ENCODE measurements at regions of chr4 and their contacts with region 1.

Region 1: DNA sequence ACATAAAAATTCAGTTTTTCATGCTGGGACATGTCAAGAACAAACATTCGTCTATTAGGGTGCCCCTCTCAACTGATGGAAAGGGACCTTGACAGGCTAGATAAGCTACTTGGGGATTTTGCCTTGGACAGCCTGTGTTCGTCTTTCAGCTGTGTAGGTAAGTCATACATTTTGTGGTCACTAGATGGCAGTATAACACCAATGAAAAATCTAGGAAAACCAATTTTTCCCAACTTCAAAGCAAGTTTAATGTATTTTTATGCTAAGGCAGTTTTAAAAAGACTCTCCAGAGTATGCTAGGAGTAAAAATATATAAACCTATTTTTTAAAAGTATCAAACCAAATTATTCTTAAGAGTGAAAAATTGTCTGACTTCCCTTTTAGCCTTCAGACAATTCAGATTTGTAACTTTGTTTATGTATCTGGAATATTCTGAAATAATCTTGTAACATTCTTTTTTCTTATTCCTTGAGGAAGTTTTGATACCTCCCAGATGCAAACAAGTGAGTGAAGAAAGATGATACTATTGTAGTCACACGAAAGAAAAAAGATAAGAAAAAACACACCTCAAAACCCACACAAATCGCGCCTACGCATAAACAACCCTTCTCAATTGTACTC is 158.3 kb downstream of the CPE start:
- DNase-seq: no peak
- ATAC-seq: peak; percentile 56

Region 2: DNA sequence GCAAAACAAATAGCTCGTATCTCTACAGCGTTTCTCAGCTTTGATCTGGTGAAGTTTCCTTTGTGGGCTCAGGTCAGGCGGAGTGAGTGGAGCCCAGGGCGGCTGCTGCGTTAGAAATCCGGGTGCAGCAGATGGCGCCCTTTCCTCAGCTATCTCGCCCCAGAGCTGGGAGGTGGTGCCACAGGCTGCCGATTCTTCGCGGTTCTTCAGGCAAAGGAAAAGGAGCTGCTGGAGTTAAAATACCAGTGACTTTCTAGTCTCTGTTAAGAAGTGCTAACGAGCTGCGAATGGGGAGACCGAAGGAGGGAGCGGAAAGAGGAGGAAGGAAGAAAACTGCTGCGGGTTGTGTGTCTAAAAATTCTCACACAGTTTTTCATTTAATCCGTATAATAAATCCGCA is 43.8 kb before region 1 on chr4:
- intact Hi-C with region 1: no loop called
- DNase-seq: peak; percentile 81
- ATAC-seq: peak; percentile 96

Region 3: DNA sequence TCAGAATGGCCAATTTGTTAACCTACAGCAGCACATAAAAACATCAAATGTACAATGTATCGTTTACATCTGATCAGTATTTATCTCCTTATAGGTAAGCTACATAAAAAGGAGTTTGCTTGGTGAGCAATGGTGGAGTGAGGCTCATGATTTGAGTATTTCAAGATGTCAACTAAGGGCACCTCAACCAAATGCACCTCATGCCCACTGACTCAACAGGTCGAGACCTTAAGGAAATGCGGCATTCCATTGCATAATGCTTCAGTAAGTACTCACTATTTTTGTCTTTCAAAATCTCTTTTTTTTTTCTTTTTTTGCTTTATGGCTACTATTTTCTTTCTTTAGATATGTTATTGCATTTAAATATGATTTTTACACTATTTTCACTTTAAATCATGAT is 154.9 kb after region 1 on chr4:
- intact Hi-C with region 1: loop called (anchors 10 kb)
- DNase-seq: no peak
- ATAC-seq: no peak

Region 4: DNA sequence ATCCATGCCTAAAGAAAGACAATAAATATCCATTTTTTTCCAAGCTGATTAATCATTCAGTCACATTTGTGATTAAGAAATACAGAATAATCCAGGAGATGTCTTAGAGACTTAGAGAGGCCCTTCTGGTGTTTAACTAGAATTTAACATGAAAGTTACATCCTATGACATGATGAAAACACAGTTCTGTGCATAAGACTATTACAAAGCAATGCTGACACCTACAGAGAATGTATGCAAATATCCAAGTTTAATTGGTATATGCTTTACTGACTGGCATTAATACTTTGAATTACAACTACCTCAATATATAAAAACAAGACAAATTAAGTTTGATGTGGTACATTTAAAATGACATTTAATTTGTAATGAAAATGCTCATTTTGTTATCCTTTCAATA is 318.1 kb after region 1 on chr4:
- intact Hi-C with region 1: loop called (anchors 10 kb)
- DNase-seq: no peak
- ATAC-seq: no peak

Region 5: GRCh38 chr4:166091912-166092510 is 554.9 kb after region 1 on chr4:
- intact Hi-C with region 1: loop called (anchors 2 kb)
- DNase-seq: no peak
- ATAC-seq: no peak

Region 6: DNA sequence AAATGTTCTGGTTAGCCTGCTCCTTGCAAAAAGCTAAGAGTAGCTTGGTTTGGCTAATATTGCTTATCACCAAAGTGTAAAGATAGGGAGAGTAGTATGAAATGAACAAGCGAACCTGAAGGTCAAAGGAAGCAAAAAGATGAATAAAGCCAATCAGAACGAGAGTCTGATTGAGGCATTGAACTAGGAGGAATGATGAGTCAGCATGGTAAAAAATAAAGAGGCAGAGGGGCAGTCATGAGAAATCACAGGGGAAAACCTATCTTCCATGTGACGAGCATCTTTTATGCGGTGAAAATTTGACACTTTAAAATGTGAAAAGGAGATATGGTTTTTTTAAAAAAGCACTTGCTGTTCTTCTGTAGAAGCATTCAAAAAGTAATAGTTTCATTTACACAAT is 1163.5 kb after region 1 on chr4:
- intact Hi-C with region 1: no loop called
- DNase-seq: no peak
- ATAC-seq: no peak

Measured in Right ventricle myocardium superior (tissue), 1 donor.